ENCODE measurements at regions of chr7 and their contacts with region 1.

Region 1: GRCh38 chr7:67447913-67448670 is 451.5 kb downstream of the TYW1 start:
- DNase-seq: no peak
- ATAC-seq: no peak
- H3K4me3 ChIP-seq: no peak overlapping the region
- H3K27ac ChIP-seq: no peak overlapping the region
- H3K4me1 ChIP-seq: no peaks in the 10 kb centered on the region
- H3K27me3 ChIP-seq: no peaks in the 10 kb centered on the region
- CTCF ChIP-seq: no peak
- EP300 ChIP-seq: no peak
- POLR2A ChIP-seq: no peak
- RAD21 ChIP-seq: no peak

Region 2: DNA sequence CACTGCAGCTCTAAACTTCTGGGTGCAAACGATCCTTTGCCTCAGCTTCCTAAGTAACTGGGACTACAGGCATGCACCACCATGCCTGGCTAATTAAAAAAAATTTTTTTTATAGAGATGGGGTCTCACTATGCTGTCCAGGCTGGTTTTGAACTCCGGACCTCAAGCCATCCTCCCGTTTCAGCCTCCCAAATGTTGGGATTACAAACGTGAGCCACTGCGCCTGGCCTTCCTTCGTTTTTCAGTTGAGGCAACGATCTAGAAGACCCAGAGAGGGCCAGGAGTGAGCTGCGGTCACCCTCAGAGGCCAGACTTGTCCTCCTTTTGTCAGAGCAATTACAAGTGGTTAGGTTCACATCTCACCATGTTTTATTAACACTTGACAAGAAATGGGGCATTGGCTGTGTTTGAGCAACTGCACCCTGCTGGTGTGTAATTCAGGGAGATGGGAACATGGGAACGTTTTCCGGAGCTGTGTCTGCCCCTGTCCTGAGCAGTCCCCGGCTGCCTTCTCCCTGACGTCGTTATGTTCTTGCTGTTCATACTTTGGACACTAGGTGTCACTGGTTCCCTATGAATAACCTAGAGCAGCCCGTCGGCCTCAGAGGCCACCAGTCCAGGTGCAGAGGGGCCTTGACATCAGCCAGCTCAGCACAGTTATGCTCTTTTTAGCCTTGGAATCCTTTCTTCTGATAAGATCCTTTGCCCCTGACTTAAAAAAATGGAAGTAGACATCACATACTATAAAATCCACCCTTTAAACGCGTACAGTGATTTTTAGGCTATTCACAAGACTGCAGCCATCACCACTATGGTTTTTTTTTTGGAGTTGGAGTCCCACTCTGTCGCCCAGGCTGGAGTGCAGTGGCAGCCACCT is 76.4 kb before region 1 on chr7:
- CTCF ChIA-PET with region 1: no interaction called
- POLR2A ChIA-PET with region 1: no interaction called
- RAD21 ChIA-PET with region 1: no interaction called
- SMC1A ChIA-PET with region 1: no interaction called
- in situ Hi-C with region 1: no loop called
- intact Hi-C with region 1: loop called (anchors 10 kb)
- DNase-seq: peak; percentile 21
- ATAC-seq: peak; percentile 99
- H3K4me3 ChIP-seq: no peak overlapping the region
- H3K27ac ChIP-seq: no peak overlapping the region
- H3K4me1 ChIP-seq: no peaks in the 10 kb centered on the region
- H3K27me3 ChIP-seq: no peaks in the 10 kb centered on the region
- CTCF ChIP-seq: peak; percentile 76 to 85 (median 84)
- EP300 ChIP-seq: no peak
- POLR2A ChIP-seq: no peak
- RAD21 ChIP-seq: peak; percentile 87